ENCODE measurements at regions of chr10 and their contacts with region 1.

Region 1: DNA sequence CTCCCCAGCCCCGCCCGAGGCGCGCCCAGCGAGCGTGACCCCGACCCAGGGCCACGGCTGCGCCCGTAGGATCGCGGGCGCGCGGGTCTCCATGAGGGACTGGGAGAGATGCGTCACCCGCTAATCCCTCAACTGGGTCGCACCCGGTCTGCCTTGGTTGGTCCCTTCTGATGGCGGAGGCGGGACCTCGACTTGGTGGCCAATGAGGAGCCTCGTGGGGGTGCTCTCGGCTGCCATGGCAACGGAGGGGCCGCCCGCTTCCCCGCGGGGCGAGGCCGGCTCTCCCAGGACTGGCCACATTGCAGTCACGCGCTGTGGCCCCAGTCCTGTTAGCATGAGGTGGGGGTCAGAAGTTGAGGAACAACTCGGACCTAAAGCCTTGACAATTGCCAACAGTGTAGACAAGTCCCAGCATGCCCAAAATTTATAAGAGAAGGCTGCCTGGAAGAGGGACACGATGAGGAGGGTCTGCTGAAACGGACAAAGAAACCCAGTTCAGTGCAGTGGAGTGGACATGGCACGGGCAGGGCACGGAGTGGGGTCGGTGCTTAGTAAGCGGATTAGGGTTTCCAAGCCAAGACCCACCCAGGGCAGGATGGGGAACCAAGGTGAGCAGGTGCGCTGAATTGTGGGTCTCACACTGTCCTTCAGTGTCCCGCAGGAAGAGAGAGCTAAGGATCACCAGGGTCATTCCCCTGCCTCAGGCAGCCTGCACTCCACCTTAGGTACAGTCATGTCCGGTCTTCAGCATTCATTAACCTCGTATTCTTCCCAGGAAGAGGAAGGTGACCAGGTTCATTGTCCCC is 24.4 kb downstream of the DDIT4 start:
- DNase-seq: peak; percentile 88 to 95
- ATAC-seq: peak; percentile 74 to 85 (median 74)
- H3K4me3 ChIP-seq: peak overlapping the region; percentile 65
- H3K4me3 Mint-ChIP-seq: peak overlapping the region; percentile 89
- H3K27ac ChIP-seq: peak overlapping the region; percentile 98
- H3K27ac Mint-ChIP-seq: peak overlapping the region; percentile 97 to 99
- H3K4me1 ChIP-seq: peaks cover 51% of the 10 kb centered on the region
- H3K4me1 Mint-ChIP-seq: peaks cover 35 to 59% of the 10 kb centered on the region in 2 donors
- H3K27me3 ChIP-seq: no peaks in the 10 kb centered on the region
- H3K27me3 Mint-ChIP-seq: no peaks in the 10 kb centered on the region
- CTCF ChIP-seq: no peak

Region 2: DNA sequence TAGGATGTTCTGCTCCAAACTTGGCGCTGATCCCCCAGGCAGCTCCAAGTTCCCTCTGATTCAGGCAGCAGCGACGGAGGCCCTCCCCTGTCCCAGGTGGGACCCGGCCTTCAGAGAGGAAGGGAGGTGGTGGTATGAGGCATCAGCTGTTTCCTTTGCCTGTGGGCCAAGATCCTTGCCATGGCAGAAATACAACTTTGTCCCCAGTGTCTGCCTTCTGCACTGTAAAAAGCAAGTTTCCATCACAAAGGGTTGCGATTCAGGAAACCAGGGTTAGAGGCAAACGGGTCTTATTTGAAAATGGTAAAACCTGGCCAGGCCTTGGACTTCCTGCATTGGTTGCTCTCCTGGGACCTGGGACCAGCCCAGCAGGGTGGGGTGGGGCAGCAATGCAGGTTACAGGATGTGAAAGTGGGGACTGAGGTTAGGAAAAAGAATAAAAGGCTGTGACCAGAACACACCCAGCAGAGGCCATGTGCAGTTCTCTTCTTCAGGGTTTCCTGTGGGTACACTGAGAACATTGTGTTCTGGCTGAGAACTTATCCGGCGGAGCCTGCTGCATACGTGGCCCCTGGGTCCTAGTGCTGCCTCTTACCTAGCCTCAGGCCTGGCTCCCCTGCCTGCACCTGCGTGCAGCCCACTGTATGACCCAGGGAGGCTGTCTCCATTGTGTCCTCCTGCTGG is 49.6 kb before region 1 on chr10:
- intact Hi-C with region 1: loop called (anchors 2 kb)
- DNase-seq: peak; percentile 58 to 88
- ATAC-seq: peak; percentile 90 to 95 (median 94)
- H3K4me3 ChIP-seq: peak overlapping the region; percentile 26
- H3K4me3 Mint-ChIP-seq: peak overlapping the region; percentile 88
- H3K27ac ChIP-seq: peak overlapping the region; percentile 88
- H3K27ac Mint-ChIP-seq: peak overlapping the region; percentile 88 to 89
- H3K4me1 ChIP-seq: peaks cover 97% of the 10 kb centered on the region
- H3K4me1 Mint-ChIP-seq: peaks cover 69 to 87% of the 10 kb centered on the region in 2 donors
- H3K27me3 ChIP-seq: no peaks in the 10 kb centered on the region
- H3K27me3 Mint-ChIP-seq: no peaks in the 10 kb centered on the region
- CTCF ChIP-seq: no peak

Region 3: GRCh38 chr10:72273410-72274212 is 24.6 kb before region 1 on chr10 and contains the start of gene DDIT4:
- intact Hi-C with region 1: loop called (anchors 1 kb)
- DNase-seq: peak; percentile 98
- ATAC-seq: peak; percentile 90 to 98 (median 90)
- H3K4me3 ChIP-seq: peak within 1 kb of the TSS; percentile 90
- H3K4me3 Mint-ChIP-seq: peak within 1 kb of the TSS; percentile 99
- H3K27ac ChIP-seq: peak within 1 kb of the TSS; percentile 82
- H3K27ac Mint-ChIP-seq: peak within 1 kb of the TSS; percentile 91 to 94
- H3K4me1 ChIP-seq: peaks cover 48% of the 10 kb centered on the region
- H3K4me1 Mint-ChIP-seq: peaks cover 39 to 64% of the 10 kb centered on the region in 2 donors
- H3K27me3 ChIP-seq: no peaks in the 10 kb centered on the region
- H3K27me3 Mint-ChIP-seq: no peaks in the 10 kb centered on the region
- CTCF ChIP-seq: no peak
- total RNA-seq, gene DDIT4: 174 to 232 (median 200) TPM

Region 4: GRCh38 chr10:72319416-72320254 is 21.5 kb after region 1 on chr10:
- intact Hi-C with region 1: loop called (anchors 1 kb)
- DNase-seq: peak; percentile 89 to 95
- ATAC-seq: peak; percentile 68 to 87 (median 83)
- H3K4me3 ChIP-seq: peak overlapping the region; percentile 37
- H3K4me3 Mint-ChIP-seq: peak overlapping the region; percentile 75
- H3K27ac ChIP-seq: peak overlapping the region; percentile 95
- H3K27ac Mint-ChIP-seq: peak overlapping the region; percentile 85 to 97
- H3K4me1 ChIP-seq: peaks cover 85% of the 10 kb centered on the region
- H3K4me1 Mint-ChIP-seq: peaks cover 52 to 69% of the 10 kb centered on the region in 2 donors
- H3K27me3 ChIP-seq: no peaks in the 10 kb centered on the region
- H3K27me3 Mint-ChIP-seq: no peaks in the 10 kb centered on the region
- CTCF ChIP-seq: no peak

Measured in natural killer cell (primary cell).